ENCODE measurements at regions of chr10 and their contacts with region 1.

Region 1: GRCh38 chr10:13167568-13167967 is 6.2 kb downstream of the MCM10 start:
- DNase-seq: no peak
- H3K4me3 Mint-ChIP-seq: no peak overlapping the region
- H3K27ac Mint-ChIP-seq: no peak overlapping the region
- H3K4me1 Mint-ChIP-seq: peaks cover 9% of the 10 kb centered on the region
- H3K27me3 Mint-ChIP-seq: no peaks in the 10 kb centered on the region
- CTCF ChIP-seq: no peak

Region 2: DNA sequence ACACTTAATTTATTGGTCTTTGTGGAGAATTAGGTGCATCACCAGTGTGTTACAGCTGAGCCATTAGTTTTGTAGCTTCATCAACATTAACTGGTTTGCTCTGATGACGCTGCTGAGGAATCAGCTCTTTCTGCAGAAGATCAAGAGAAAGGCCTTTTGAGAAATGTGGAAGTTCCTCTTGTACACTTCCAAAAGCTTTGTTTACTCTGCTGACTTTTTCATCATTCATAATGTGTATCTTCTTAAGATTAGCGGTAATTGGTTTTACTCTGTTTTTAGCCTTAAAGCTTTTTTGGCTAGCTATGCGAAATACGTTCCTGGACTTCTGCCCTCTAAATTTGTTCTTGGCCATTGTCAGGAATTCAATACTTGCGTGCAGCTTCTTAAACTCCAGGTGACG is 140.5 kb after region 1 on chr10:
- CTCF ChIA-PET with region 1: interaction called, 39 read pairs
- POLR2A ChIA-PET with region 1: no interaction called
- intact Hi-C with region 1: loop called (anchors 2 kb)
- DNase-seq: no peak
- H3K4me3 Mint-ChIP-seq: no peak overlapping the region
- H3K27ac Mint-ChIP-seq: no peak overlapping the region
- H3K4me1 Mint-ChIP-seq: no peaks in the 10 kb centered on the region
- H3K27me3 Mint-ChIP-seq: no peaks in the 10 kb centered on the region
- CTCF ChIP-seq: no peak

Region 3: DNA sequence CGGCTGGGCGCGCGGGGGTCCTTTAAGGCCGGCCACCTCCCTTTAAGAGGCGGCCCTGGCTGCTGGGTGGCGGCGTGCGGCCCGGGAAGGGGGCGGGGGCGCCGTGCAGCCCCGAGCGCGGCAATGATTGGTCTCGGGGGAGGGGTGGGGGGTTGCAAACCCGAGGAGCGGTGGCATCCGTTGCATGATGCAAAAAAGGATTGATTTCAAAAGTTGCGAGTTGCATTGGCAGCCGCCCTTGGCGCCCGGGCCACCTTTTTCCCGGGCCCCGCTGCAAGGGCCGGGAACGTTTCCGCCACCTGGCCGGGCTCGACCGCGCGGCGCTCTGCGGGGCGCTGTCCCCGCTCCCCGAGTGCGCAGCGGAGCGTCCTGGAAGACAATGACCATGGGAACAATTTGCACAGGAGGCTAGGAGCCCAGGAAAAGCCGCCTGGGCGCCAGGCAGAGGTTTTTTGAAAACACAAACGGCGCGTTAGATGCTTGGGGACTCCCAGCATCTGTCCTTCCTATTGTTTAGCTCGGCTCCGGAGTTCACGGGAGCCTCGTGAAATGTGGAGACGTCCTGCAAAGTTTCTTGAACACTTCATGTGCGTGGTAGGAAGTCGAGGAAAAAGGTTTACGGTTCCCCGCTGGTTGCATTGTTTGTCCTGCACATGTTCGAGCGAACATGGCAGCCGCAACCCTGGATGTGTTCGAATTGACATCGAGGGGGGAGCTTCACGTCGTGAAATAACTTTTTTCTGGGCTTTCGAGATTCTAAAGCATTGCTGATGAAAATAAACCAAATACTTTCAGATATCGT is 180.8 kb after region 1 on chr10 and contains the start of gene SEPHS1:
- CTCF ChIA-PET with region 1: no interaction called
- POLR2A ChIA-PET with region 1: no interaction called
- intact Hi-C with region 1: no loop called
- DNase-seq: peak; percentile 87
- H3K4me3 Mint-ChIP-seq: peak within 1 kb of the TSS; percentile 86
- H3K27ac Mint-ChIP-seq: peak within 1 kb of the TSS; percentile 83
- H3K4me1 Mint-ChIP-seq: peaks cover 13% of the 10 kb centered on the region
- H3K27me3 Mint-ChIP-seq: peaks cover 10% of the 10 kb centered on the region
- CTCF ChIP-seq: no peak
- total RNA-seq, gene SEPHS1: 44.8 and 60.8 TPM in 2 replicates

Measured in MCF 10A (cell line).